Posterior vena cava (tissue), 2 donors: ENCODE measurements at regions of chr11 and their contacts with region 1.

Region 1: DNA sequence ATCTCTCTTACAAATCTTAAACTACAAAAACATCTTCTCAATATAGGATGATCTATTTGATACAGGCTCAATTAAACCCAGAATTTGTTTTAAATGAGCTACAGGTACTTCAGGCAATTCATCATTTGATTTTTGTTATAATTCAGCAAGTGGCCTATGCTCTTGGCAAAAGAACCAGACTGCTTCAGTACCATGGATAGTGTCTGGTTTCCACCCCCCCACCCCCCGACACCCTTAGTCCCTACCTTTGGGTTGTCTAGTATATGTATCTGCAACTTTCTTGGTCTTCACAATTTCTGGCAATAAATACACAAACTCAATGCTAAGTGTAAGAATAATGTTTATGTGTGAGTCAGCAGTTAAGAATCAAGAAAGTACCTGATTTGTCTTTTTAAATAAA is 97.3 kb upstream of the API5 start:
- DNase-seq: no peak

Region 2: DNA sequence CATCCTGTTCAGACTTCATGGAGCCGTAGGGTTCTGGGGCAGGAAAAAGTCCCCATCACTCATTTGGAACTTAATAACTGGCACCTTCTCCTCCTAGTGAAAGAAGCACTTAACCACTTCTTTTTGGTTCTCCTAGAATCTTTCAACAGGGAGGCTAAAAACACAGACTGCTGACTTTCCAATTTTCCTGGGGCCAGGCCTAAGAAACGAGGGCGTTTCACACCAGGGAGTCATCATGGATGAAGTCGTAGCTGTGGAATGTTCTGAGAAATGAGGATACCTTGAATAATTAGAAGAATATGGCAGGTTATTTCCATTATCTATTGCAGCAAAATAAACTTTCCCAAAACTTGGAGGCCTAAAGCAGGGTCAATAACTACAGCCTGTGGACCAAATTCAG is 71.4 kb after region 1 on chr11:
- intact Hi-C with region 1: loop called in 1 of 2 experiments (anchors 2 kb)
- DNase-seq: no peak